Breast epithelium (tissue), 4 donors: ENCODE measurements at regions of chr1 and their contacts with region 1.

Region 1: GRCh38 chr1:2194898-2195673 is 514 bp upstream of the FAAP20 start:
- DNase-seq: peak; percentile 88 to 89
- H3K4me3 ChIP-seq: peak overlapping the region; percentile 58 to 75 (median 73)
- H3K27ac ChIP-seq: peak overlapping the region; percentile 93 to 94
- H3K4me1 ChIP-seq: peaks cover 3 to 27% of the 10 kb centered on the region in 2 donors
- H3K27me3 ChIP-seq: no peaks in the 10 kb centered on the region
- CTCF ChIP-seq: peak; percentile 78 to 98 (median 98)
- POLR2A ChIP-seq: no peak

Region 2: GRCh38 chr1:2240270-2241156 is 45.4 kb after region 1 on chr1:
- intact Hi-C with region 1: no loop called
- DNase-seq: peak; percentile 84
- H3K4me3 ChIP-seq: peak overlapping the region in 2 of 3 donors; percentile 3 to 50
- H3K27ac ChIP-seq: peak overlapping the region; percentile 74 to 82
- H3K4me1 ChIP-seq: peaks cover 43 to 58% of the 10 kb centered on the region in 2 donors
- H3K27me3 ChIP-seq: no peaks in the 10 kb centered on the region
- CTCF ChIP-seq: no peak
- POLR2A ChIP-seq: no peak

Region 3: GRCh38 chr1:2381741-2382620 is 186.9 kb after region 1 on chr1:
- intact Hi-C with region 1: loop called (anchors 5 kb)
- DNase-seq: peak; percentile 69 to 79
- H3K4me3 ChIP-seq: peak overlapping the region in 1 of 3 donors; percentile 2
- H3K27ac ChIP-seq: peak overlapping the region in 1 of 2 donors; percentile 77
- H3K4me1 ChIP-seq: peaks cover 7 to 9% of the 10 kb centered on the region in 2 donors
- H3K27me3 ChIP-seq: no peaks in the 10 kb centered on the region
- CTCF ChIP-seq: peak; percentile 84 to 96 (median 94)
- POLR2A ChIP-seq: no peak

Region 4: DNA sequence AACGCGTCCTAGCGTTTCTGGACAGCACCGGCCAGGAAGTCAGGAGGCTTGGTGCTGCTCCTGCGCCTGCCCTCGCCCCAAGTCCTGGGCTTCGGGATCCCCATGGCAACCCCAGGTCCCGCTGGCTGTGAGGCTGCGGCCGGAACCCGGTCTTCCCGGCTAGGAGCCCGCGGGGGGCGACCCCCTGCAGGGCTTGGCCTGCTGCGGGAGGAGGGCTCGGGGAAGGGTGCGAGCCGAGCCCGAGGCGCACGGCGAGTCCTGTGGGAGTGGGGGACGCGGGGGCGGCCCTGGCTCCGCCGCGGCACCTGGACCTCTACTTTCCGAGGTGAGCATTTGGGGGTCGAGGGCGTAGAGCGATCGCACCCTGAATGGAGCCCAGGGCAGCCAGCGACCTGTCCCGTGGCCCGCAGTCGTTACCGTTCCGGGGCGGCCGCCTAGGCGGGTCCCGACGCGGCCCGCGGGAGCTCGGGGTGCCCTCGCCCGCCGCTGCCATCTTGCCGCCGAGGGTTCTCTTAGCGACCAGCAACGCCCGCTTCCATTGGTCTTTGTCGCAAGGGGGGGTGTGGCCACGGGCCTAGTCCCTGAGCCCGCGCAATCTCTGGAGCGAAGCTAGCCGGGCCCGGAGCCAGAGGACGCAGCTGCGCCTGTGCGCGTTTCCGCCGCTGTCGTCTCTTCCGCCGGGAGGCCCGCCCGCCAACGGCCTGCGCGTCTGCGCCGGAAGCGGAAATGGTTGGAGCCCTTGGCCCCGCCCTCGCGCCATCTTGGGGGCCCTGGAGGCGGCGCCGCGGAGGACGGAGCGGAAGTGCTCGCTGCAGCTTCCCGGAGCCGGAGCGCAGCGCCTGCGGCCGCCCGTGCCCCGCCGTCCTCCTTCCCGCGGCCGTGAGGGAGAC is 196.2 kb after region 1 on chr1 and contains the starts of genes MORN1 and RER1:
- intact Hi-C with region 1: loop called (anchors 5 kb)
- DNase-seq: peak; percentile 98 to 99
- H3K4me3 ChIP-seq: peak within 1 kb of the TSS; percentile 87 to 96 (median 92)
- H3K27ac ChIP-seq: peak within 1 kb of the TSS; percentile 90 to 95
- H3K4me1 ChIP-seq: peaks cover 4 to 16% of the 10 kb centered on the region in 2 donors
- H3K27me3 ChIP-seq: no peaks in the 10 kb centered on the region
- CTCF ChIP-seq: no peak
- POLR2A ChIP-seq: peak; percentile 43
- total RNA-seq, gene MORN1: 4.0 to 18.1 (median 17.7) TPM
- total RNA-seq, gene RER1: 58.3 to 75.1 (median 70.4) TPM